ENCODE measurements at regions of chr15 and their contacts with region 1.

Region 1: GRCh38 chr15:63553388-63553791 is 43.8 kb upstream of the FBXL22 start:
- DNase-seq: peak in 1 of 9 donors; percentile 12
- ATAC-seq: no peak
- H3K4me3 ChIP-seq: no peak overlapping the region
- H3K4me3 Mint-ChIP-seq: no peak overlapping the region
- H3K27ac ChIP-seq: no peak overlapping the region
- H3K27ac Mint-ChIP-seq: peak overlapping the region in 6 of 9 donors; percentile 30 to 88 (median 66)
- H3K4me1 ChIP-seq: peaks cover 4 to 11% of the 10 kb centered on the region in 2 donors
- H3K4me1 Mint-ChIP-seq: peaks cover 11 to 62% (median 53%) of the 10 kb centered on the region in 7 donors
- H3K27me3 ChIP-seq: no peaks in the 10 kb centered on the region
- H3K27me3 Mint-ChIP-seq: no peaks in the 10 kb centered on the region

Region 2: GRCh38 chr15:62899090-62899493 is 654.3 kb before region 1 on chr15:
- CTCF ChIA-PET with region 1: no interaction called
- POLR2A ChIA-PET with region 1: no interaction called
- intact Hi-C with region 1: no loop called
- DNase-seq: no peak
- ATAC-seq: no peak
- H3K4me3 ChIP-seq: no peak overlapping the region
- H3K4me3 Mint-ChIP-seq: no peak overlapping the region
- H3K27ac ChIP-seq: no peak overlapping the region
- H3K27ac Mint-ChIP-seq: no peak overlapping the region
- H3K4me1 ChIP-seq: no peaks in the 10 kb centered on the region
- H3K4me1 Mint-ChIP-seq: no peaks in the 10 kb centered on the region
- H3K27me3 ChIP-seq: no peaks in the 10 kb centered on the region
- H3K27me3 Mint-ChIP-seq: peaks cover 0 to 11% (median 4%) of the 10 kb centered on the region in 5 donors

Region 3: DNA sequence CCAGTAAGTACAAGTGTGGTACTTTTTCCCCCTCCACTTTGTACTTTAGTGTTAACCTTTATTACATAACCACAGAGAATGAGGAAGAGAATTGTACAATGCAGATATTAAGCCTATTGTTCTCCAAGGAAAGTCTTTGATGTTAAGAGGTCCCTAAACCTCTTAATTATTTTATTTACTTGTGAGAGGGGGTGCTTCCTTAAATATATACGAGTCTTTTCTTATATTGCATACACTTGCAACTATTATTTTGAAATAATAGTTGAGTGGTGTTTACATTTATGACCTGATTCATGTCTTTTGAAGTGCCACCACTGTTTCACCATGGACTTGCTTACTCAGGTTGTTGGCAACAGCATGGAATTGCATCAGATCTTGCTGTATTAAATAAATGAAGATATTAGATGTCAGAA is 38.9 kb before region 1 on chr15:
- CTCF ChIA-PET with region 1: interaction called, 6 read pairs
- POLR2A ChIA-PET with region 1: interaction called, 4 read pairs
- intact Hi-C with region 1: loop called in 1 of 2 experiments (anchors 2 kb)
- DNase-seq: no peak
- ATAC-seq: peak; percentile 40
- H3K4me3 ChIP-seq: no peak overlapping the region
- H3K4me3 Mint-ChIP-seq: peak overlapping the region in 9 of 10 donors; percentile 9 to 80 (median 65)
- H3K27ac ChIP-seq: no peak overlapping the region
- H3K27ac Mint-ChIP-seq: peak overlapping the region in 7 of 9 donors; percentile 26 to 88 (median 79)
- H3K4me1 ChIP-seq: peaks cover 57 to 84% of the 10 kb centered on the region in 2 donors
- H3K4me1 Mint-ChIP-seq: peaks cover 58 to 99% (median 97%) of the 10 kb centered on the region in 7 donors
- H3K27me3 ChIP-seq: no peaks in the 10 kb centered on the region
- H3K27me3 Mint-ChIP-seq: no peaks in the 10 kb centered on the region

Region 4: GRCh38 chr15:63539521-63539920 is 13.9 kb before region 1 on chr15:
- CTCF ChIA-PET with region 1: interaction called, 3 read pairs
- POLR2A ChIA-PET with region 1: no interaction called
- intact Hi-C with region 1: loop called in 1 of 2 experiments (anchors 2 kb)
- DNase-seq: no peak
- ATAC-seq: no peak
- H3K4me3 ChIP-seq: no peak overlapping the region
- H3K4me3 Mint-ChIP-seq: no peak overlapping the region
- H3K27ac ChIP-seq: no peak overlapping the region
- H3K27ac Mint-ChIP-seq: peak overlapping the region in 4 of 9 donors; percentile 5 to 69 (median 13)
- H3K4me1 ChIP-seq: peaks cover 5 to 7% of the 10 kb centered on the region in 2 donors
- H3K4me1 Mint-ChIP-seq: peaks cover 30 to 80% (median 73%) of the 10 kb centered on the region in 7 donors
- H3K27me3 ChIP-seq: no peaks in the 10 kb centered on the region
- H3K27me3 Mint-ChIP-seq: no peaks in the 10 kb centered on the region

Region 5: DNA sequence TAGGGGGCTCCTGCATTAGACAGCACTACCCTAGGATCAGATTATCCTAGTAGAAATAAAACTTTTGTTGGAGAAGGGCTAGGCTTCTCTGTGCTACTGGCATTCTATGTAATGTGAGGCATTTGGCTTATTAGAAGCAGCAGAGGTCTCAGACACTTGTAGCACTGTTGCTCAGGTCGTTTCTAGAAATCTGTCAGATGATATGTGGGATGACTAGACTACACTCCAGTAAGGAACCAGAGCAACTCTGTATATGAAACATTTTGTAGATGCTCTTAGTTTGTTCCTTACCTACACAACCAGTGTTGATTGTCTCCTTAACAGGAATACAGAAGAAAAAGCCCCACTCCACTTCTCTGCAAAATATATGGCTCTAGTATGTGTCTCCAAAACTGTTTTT is 21.9 kb after region 1 on chr15:
- CTCF ChIA-PET with region 1: no interaction called
- POLR2A ChIA-PET with region 1: no interaction called
- intact Hi-C with region 1: loop called in 1 of 2 experiments (anchors 2 kb)
- DNase-seq: no peak
- ATAC-seq: no peak
- H3K4me3 ChIP-seq: no peak overlapping the region
- H3K4me3 Mint-ChIP-seq: no peak overlapping the region
- H3K27ac ChIP-seq: no peak overlapping the region
- H3K27ac Mint-ChIP-seq: peak overlapping the region in 2 of 9 donors; percentile 5 to 21
- H3K4me1 ChIP-seq: no peaks in the 10 kb centered on the region
- H3K4me1 Mint-ChIP-seq: peaks cover 0 to 35% (median 6%) of the 10 kb centered on the region in 7 donors
- H3K27me3 ChIP-seq: no peaks in the 10 kb centered on the region
- H3K27me3 Mint-ChIP-seq: no peaks in the 10 kb centered on the region

Region 6: DNA sequence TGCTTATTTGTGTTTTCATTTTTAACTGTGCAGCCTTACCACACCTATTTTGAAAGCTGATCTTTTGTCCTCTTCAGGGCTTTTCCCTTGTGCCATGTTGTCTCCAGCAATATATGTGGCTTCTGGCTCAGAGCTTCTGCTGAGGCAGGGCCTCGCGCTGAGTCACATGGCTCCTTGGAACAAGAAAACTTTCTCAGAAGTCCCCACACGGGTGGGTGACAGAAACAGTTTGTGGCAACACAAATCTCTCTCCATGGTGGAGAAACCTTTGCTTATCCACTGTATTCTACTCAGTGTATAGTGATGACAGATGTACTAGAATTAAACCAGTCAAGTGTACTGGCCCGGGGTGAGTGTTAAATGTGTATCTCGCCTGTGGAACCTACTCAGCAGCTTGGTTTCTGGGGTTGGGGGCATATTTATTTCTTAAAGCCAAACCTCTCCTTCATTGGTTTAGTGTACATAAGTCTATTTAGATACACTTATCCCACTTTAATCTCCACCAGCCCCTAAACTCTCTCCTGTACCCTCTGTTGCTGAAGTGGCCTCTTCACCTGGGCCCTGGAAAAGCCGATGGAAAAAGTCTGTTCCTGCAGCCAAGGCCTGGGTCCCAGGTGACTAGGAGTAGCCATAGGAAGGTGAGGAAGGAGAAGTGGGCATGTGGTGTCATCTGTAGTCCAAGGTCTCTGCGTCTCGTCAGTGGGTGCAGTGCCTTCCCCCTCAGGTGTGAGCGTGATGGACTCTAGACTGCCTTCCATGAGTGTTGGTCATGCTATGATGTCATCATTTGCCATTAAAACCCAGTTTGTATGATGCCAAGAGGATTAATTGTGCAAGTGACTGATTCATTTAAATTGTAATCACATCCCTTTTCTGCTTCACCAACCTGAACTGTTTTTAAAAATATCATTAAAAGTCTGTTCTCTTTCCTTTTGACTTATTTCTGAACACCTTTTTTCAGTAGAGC is 40.6 kb after region 1 on chr15:
- CTCF ChIA-PET with region 1: no interaction called
- POLR2A ChIA-PET with region 1: interaction called, 3 read pairs
- intact Hi-C with region 1: loop called in 1 of 2 experiments (anchors 5 kb)
- DNase-seq: no peak
- ATAC-seq: peak; percentile 10
- H3K4me3 ChIP-seq: no peak overlapping the region
- H3K4me3 Mint-ChIP-seq: peak overlapping the region in 4 of 10 donors; percentile 3 to 25 (median 6)
- H3K27ac ChIP-seq: no peak overlapping the region
- H3K27ac Mint-ChIP-seq: peak overlapping the region; percentile 43 to 91 (median 78)
- H3K4me1 ChIP-seq: peaks cover 0 to 10% of the 10 kb centered on the region in 2 donors
- H3K4me1 Mint-ChIP-seq: peaks cover 30 to 79% (median 71%) of the 10 kb centered on the region in 7 donors
- H3K27me3 ChIP-seq: no peaks in the 10 kb centered on the region
- H3K27me3 Mint-ChIP-seq: no peaks in the 10 kb centered on the region

Region 7: GRCh38 chr15:64046347-64047153 is 493.2 kb after region 1 on chr15 and contains the start of gene DAPK2:
- CTCF ChIA-PET with region 1: no interaction called
- POLR2A ChIA-PET with region 1: no interaction called
- intact Hi-C with region 1: no loop called
- DNase-seq: peak; percentile 29 to 83 (median 63)
- ATAC-seq: peak; percentile 91
- H3K4me3 ChIP-seq: peak within 1 kb of the TSS; percentile 55
- H3K4me3 Mint-ChIP-seq: peak within 1 kb of the TSS; percentile 74 to 85 (median 82)
- H3K27ac ChIP-seq: no peak within 1 kb of the TSS
- H3K27ac Mint-ChIP-seq: peak within 1 kb of the TSS in 5 of 9 donors; percentile 28 to 88 (median 61)
- H3K4me1 ChIP-seq: peaks cover 0 to 5% of the 10 kb centered on the region in 2 donors
- H3K4me1 Mint-ChIP-seq: peaks cover 5 to 30% (median 10%) of the 10 kb centered on the region in 7 donors
- H3K27me3 ChIP-seq: no peaks in the 10 kb centered on the region
- H3K27me3 Mint-ChIP-seq: peaks cover 4 to 41% (median 13%) of the 10 kb centered on the region in 5 donors
- total RNA-seq, gene DAPK2: 0.46 to 9.3 (median 4.2) TPM in 4 of 5 experiments, not detected in the other